Esophagus muscularis mucosa (tissue), 4 donors: ENCODE measurements at regions of chr7 and their contacts with region 1.

Region 1: DNA sequence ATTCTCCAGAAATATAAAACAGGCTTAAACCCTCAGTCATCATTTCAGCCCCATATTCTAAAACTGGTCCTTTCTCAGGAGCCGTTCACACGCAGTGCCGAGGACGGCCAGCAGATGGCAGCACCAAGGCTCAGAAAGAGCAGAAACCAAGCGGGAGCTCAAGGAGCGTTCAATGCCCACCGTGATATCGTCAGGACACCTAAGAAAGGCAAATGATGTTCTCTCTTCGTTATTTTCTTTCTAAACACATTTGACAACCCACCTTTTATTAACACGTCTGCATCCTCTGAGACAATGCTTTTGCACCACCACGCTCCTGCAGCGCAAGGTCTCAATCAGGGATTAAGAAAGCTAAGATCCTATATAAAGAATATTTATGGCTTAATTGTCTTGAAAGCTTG is 45.7 kb upstream of the RBM33 start:
- DNase-seq: peak; percentile 95
- H3K4me3 ChIP-seq: no peak overlapping the region
- H3K27ac ChIP-seq: no peak overlapping the region
- H3K4me1 ChIP-seq: peaks cover 0 to 4% (median 0%) of the 10 kb centered on the region in 4 donors
- H3K27me3 ChIP-seq: peaks cover 0 to 57% (median 0%) of the 10 kb centered on the region in 4 donors
- CTCF ChIP-seq: peak; percentile 90 to 99 (median 97)
- EP300 ChIP-seq: no peak
- POLR2A ChIP-seq: no peak

Region 2: DNA sequence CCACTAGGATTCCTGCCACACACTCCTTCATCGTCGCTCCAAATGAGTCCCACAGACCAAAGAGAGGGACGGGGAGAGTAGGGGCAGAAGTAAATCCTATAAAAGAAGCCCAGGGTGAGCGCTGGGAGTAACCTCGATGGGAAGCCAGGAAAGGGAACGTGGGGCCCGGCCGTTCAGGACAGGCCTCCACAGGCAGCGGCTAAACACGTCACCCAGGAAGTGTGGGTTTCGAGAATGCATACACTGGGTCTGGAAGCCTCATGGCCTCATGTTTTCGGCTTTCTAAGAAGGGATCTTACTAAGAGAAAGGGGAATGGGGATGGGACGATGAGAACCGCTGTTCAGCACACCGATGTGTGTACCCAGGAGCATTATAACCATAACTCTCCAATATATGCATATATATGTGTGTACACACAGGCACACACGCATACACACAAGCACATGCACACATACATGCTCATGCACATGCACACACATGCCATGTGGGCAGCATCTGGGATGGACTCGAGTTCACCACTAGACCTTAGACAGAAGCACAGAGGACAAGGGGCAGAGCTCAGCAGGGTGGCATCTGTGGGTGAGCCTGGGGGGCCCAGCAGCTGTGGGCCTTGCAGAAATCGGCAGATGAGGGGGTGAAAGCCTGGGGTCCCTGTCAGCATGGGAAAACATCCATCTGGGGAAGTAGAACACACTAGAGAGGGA is 37.7 kb before region 1 on chr7:
- intact Hi-C with region 1: no loop called
- DNase-seq: no peak
- H3K4me3 ChIP-seq: no peak overlapping the region
- H3K27ac ChIP-seq: no peak overlapping the region
- H3K4me1 ChIP-seq: no peaks in the 10 kb centered on the region
- H3K27me3 ChIP-seq: peaks cover 0 to 53% (median 3%) of the 10 kb centered on the region in 4 donors
- CTCF ChIP-seq: no peak
- EP300 ChIP-seq: no peak
- POLR2A ChIP-seq: no peak

Region 3: GRCh38 chr7:155738652-155739537 is 140.1 kb after region 1 on chr7:
- intact Hi-C with region 1: loop called (anchors 2 kb)
- DNase-seq: no peak
- H3K4me3 ChIP-seq: no peak overlapping the region
- H3K27ac ChIP-seq: no peak overlapping the region
- H3K4me1 ChIP-seq: peaks cover 3 to 13% (median 10%) of the 10 kb centered on the region in 4 donors
- H3K27me3 ChIP-seq: no peaks in the 10 kb centered on the region
- CTCF ChIP-seq: peak; percentile 43 to 65 (median 57)
- EP300 ChIP-seq: no peak
- POLR2A ChIP-seq: no peak

Region 4: GRCh38 chr7:155763691-155764437 is 165.1 kb after region 1 on chr7:
- intact Hi-C with region 1: loop called (anchors 1 kb)
- DNase-seq: no peak
- H3K4me3 ChIP-seq: no peak overlapping the region
- H3K27ac ChIP-seq: peak overlapping the region in 2 of 4 donors; percentile 14 to 19
- H3K4me1 ChIP-seq: peaks cover 21 to 33% (median 27%) of the 10 kb centered on the region in 4 donors
- H3K27me3 ChIP-seq: no peaks in the 10 kb centered on the region
- CTCF ChIP-seq: no peak
- EP300 ChIP-seq: no peak
- POLR2A ChIP-seq: no peak

Region 5: GRCh38 chr7:156347132-156347531 is 748.3 kb after region 1 on chr7:
- intact Hi-C with region 1: no loop called
- DNase-seq: no peak
- H3K4me3 ChIP-seq: no peak overlapping the region
- H3K27ac ChIP-seq: no peak overlapping the region
- H3K4me1 ChIP-seq: peaks cover 0 to 3% (median 0%) of the 10 kb centered on the region in 4 donors
- H3K27me3 ChIP-seq: no peaks in the 10 kb centered on the region
- CTCF ChIP-seq: no peak
- EP300 ChIP-seq: no peak
- POLR2A ChIP-seq: no peak